Endothelial cell of umbilical vein (primary cell): ENCODE measurements at regions of chr16 and their contacts with region 1.

Region 1: GRCh38 chr16:71961066-71962039 is 38.8 kb downstream of the PKD1L3 start:
- DNase-seq: peak; percentile 91
- H3K4me3 ChIP-seq: no peak overlapping the region
- H3K27ac ChIP-seq: no peak overlapping the region
- H3K4me1 ChIP-seq: peaks cover 3% of the 10 kb centered on the region
- H3K27me3 ChIP-seq: peaks cover 0 to 3% of the 10 kb centered on the region in 2 experiments
- CTCF ChIP-seq: peak; percentile 76 to 79
- POLR2A ChIP-seq: no peak

Region 2: GRCh38 chr16:71767060-71767900 is 194.1 kb before region 1 on chr16:
- CTCF ChIA-PET with region 1: interaction called, 14 read pairs
- POLR2A ChIA-PET with region 1: no interaction called
- dilution Hi-C with region 1: no loop called
- intact Hi-C with region 1: loop called (anchors 5 kb)
- DNase-seq: peak; percentile 14
- H3K4me3 ChIP-seq: no peak overlapping the region
- H3K27ac ChIP-seq: no peak overlapping the region
- H3K4me1 ChIP-seq: peaks cover 22% of the 10 kb centered on the region
- H3K27me3 ChIP-seq: no peaks in the 10 kb centered on the region
- CTCF ChIP-seq: no peak
- POLR2A ChIP-seq: no peak

Region 3: DNA sequence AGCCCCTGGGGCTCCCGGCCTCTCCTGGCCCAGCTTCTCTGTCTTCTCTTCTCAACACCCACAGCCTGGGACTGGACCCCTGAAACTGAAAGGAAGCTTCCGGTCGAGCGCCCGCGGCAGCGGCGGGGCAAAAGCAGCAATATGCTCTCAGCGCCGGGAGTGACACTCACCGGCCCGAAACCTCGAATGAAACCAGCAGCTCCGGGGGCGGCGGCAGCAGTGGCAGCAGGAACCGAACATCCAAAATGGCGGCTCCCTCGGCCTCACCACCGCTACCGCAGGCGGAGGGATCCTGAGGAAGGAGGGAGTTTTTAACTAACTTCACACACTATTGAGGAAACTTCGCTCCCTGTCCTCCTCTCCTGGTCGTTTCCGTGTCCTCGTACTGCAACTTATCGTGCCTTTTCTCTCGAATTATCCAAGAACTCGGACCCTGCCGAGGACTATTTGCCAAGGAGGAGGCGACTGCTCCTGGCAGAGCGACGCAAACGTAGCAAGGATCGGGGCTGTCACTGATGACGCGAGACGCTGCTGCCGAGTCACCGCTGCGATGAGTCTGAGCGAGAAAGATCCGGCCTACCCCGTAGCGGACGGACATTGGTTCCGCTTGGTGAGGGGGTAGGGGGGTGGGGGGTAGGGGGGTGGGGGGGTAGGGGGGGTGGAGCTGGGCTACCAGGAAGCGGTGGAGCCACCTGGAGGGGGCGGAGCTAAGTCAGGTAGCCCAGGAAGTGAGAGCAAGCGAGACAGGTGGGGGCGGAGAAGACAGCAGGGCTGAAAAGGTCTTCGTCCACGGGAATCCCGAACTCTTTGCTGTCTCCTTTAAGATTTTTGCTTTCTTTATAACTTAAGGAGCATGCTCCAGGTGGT is 152.5 kb before region 1 on chr16 and contains the start of gene AP1G1:
- CTCF ChIA-PET with region 1: interaction called, 17 read pairs
- POLR2A ChIA-PET with region 1: no interaction called
- dilution Hi-C with region 1: no loop called
- intact Hi-C with region 1: loop called (anchors 1 kb)
- DNase-seq: peak; percentile 97
- H3K4me3 ChIP-seq: peak within 1 kb of the TSS; percentile 88 to 92 (median 92)
- H3K27ac ChIP-seq: peak within 1 kb of the TSS; percentile 94
- H3K4me1 ChIP-seq: peaks cover 18% of the 10 kb centered on the region
- H3K27me3 ChIP-seq: no peaks in the 10 kb centered on the region
- CTCF ChIP-seq: no peak
- POLR2A ChIP-seq: peak; percentile 87
- total RNA-seq, gene AP1G1: 85.3 and 88.4 TPM in 2 replicates

Region 4: DNA sequence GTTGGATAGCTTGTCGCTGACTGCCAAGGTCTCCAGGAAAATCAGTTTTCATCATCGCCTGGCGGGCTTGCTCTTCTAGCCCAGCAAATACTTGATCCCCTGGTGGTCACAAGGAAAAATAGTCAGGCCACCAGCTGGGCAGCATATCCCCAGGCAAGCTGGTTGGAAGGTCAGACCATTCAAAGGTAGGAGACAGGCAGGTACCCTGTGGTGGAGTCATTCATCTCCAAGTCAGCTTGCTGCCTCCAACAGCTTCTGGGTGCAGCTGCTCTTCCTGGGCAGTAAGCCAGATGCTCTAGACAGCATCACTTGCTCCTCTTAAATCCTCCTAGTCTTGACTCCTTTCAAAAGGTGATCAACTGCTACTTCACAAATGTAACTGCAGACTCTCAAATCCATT is 93.4 kb before region 1 on chr16:
- CTCF ChIA-PET with region 1: interaction called, 12 read pairs
- POLR2A ChIA-PET with region 1: no interaction called
- dilution Hi-C with region 1: no loop called
- intact Hi-C with region 1: no loop called
- DNase-seq: no peak
- H3K4me3 ChIP-seq: no peak overlapping the region
- H3K27ac ChIP-seq: no peak overlapping the region
- H3K4me1 ChIP-seq: no peaks in the 10 kb centered on the region
- H3K27me3 ChIP-seq: no peaks in the 10 kb centered on the region
- CTCF ChIP-seq: no peak
- POLR2A ChIP-seq: no peak

Region 5: DNA sequence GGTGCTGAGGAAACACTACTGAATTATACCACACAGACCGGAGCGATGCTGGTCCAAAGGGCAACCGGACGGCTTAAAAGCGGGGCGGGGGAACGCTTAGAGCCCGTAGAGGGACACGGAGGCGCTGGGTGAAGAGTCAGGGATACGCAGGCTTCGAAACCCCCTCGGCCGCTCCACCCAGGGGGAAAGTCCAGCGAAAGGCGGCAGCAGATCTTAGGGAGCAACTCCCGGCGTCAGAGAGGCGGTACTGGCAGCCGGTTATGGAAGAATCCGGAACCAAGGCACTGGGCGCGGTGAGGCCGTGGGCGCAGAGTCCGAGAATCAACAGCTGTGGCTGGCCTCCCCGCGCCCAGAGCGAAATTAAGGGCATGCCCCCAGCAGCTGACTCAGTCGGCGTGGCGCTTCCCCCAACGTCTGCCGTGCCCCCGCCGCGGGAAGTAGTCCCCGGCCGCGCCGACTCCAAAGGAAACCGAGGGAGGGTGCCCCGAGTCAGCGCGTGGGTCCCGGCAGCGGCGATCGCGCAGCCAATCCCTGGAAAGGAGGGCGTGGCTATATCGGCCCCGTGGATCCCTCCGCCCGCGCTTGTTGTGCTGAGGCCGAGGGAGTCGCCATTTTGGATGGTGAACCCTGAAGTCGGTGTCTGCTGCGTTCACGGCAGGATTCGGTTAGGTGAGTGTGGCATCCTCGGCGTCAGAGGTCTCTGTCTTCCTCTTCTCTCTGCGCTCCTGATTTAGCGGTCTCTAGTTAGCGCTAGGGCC is 66.3 kb before region 1 on chr16 and contains the start of gene IST1:
- CTCF ChIA-PET with region 1: interaction called, 22 read pairs
- POLR2A ChIA-PET with region 1: no interaction called
- dilution Hi-C with region 1: no loop called
- intact Hi-C with region 1: loop called (anchors 1 kb)
- DNase-seq: peak; percentile 98
- H3K4me3 ChIP-seq: peak within 1 kb of the TSS; percentile 84 to 98 (median 95)
- H3K27ac ChIP-seq: peak within 1 kb of the TSS; percentile 88
- H3K4me1 ChIP-seq: peaks cover 8% of the 10 kb centered on the region
- H3K27me3 ChIP-seq: no peaks in the 10 kb centered on the region
- CTCF ChIP-seq: no peak
- POLR2A ChIP-seq: peak; percentile 95
- total RNA-seq, gene IST1: 165 and 185 TPM in 2 replicates

Region 6: GRCh38 chr16:71933913-71934695 is 27.2 kb before region 1 on chr16:
- CTCF ChIA-PET with region 1: interaction called, 22 read pairs
- POLR2A ChIA-PET with region 1: no interaction called
- dilution Hi-C with region 1: no loop called
- intact Hi-C with region 1: loop called (anchors 1 kb)
- DNase-seq: no peak
- H3K4me3 ChIP-seq: no peak overlapping the region
- H3K27ac ChIP-seq: no peak overlapping the region
- H3K4me1 ChIP-seq: peaks cover 13% of the 10 kb centered on the region
- H3K27me3 ChIP-seq: no peaks in the 10 kb centered on the region
- CTCF ChIP-seq: no peak
- POLR2A ChIP-seq: no peak